ENCODE measurements at regions of chr6 and their contacts with region 1.

Region 1: GRCh38 chr6:68967549-68968300 is 332.6 kb downstream of the ADGRB3 start:
- DNase-seq: peak; percentile 72
- H3K4me3 Mint-ChIP-seq: no peak overlapping the region
- H3K27ac Mint-ChIP-seq: no peak overlapping the region
- H3K4me1 Mint-ChIP-seq: peaks cover 11% of the 10 kb centered on the region
- H3K27me3 Mint-ChIP-seq: no peaks in the 10 kb centered on the region
- CTCF ChIP-seq: peak; percentile 84

Region 2: GRCh38 chr6:68639826-68640490 is 327.8 kb before region 1 on chr6:
- CTCF ChIA-PET with region 1: no interaction called
- intact Hi-C with region 1: loop called (anchors 2 kb)
- DNase-seq: no peak
- H3K4me3 Mint-ChIP-seq: peak overlapping the region; percentile 71
- H3K27ac Mint-ChIP-seq: peak overlapping the region; percentile 40
- H3K4me1 Mint-ChIP-seq: peaks cover 27% of the 10 kb centered on the region
- H3K27me3 Mint-ChIP-seq: peaks cover 29% of the 10 kb centered on the region
- CTCF ChIP-seq: no peak

Region 3: DNA sequence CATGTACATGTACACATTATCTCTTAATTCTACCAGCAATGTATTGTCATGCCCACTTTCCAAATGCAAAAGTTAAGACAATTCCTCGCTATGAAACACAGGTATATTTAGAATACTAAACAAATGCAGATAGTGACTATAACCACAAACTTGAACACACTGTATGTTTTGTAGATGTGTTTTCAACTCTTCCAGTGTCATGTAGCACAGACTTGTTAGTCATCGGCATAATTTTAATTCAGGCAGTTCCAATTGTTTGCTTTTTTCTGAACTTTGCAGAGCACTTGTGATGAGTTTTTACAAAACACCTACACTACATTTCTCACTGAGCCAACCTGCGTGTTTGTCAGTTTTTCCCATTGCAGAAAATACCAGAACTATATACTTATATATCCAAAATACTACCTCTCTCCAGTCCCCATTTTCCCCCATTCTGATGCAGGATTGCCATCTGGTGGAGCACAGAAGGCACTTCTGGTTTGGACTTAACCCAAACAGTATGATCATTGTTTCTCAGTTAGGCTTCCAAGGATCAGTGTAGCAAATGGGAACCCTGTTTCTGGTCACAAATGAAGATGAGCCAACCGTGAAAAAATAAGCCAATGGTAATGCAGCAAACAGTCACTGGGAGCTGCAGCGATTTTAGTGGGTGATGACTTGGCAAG is 189.2 kb before region 1 on chr6:
- CTCF ChIA-PET with region 1: no interaction called
- intact Hi-C with region 1: no loop called
- DNase-seq: peak; percentile 39
- H3K4me3 Mint-ChIP-seq: no peak overlapping the region
- H3K27ac Mint-ChIP-seq: no peak overlapping the region
- H3K4me1 Mint-ChIP-seq: no peaks in the 10 kb centered on the region
- H3K27me3 Mint-ChIP-seq: no peaks in the 10 kb centered on the region
- CTCF ChIP-seq: peak; percentile 61

Region 4: DNA sequence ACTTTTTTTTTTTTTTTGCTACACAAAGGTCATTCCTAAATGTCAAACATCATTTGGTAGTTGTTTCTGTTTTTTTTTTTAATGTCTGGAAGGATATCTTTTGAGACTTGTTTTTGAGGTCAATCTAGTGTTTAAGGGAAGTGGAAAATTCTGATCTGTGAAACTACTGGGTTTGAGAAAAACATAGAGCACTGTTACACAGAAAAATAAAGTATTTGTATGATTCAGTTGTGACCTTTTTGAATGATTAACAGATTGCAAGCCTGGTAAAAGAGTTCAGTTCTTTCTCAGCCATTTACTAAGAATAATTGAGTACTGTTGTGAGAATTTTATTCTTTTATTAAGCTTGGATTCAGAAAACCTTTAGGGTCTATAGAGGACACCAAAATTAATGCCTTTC is 55.9 kb before region 1 on chr6:
- CTCF ChIA-PET with region 1: no interaction called
- intact Hi-C with region 1: no loop called
- DNase-seq: no peak
- H3K4me3 Mint-ChIP-seq: no peak overlapping the region
- H3K27ac Mint-ChIP-seq: no peak overlapping the region
- H3K4me1 Mint-ChIP-seq: no peaks in the 10 kb centered on the region
- H3K27me3 Mint-ChIP-seq: no peaks in the 10 kb centered on the region
- CTCF ChIP-seq: no peak

Region 5: GRCh38 chr6:69155467-69155866 is 187.7 kb after region 1 on chr6:
- CTCF ChIA-PET with region 1: no interaction called
- intact Hi-C with region 1: loop called (anchors 5 kb)
- DNase-seq: no peak
- H3K4me3 Mint-ChIP-seq: no peak overlapping the region
- H3K27ac Mint-ChIP-seq: no peak overlapping the region
- H3K4me1 Mint-ChIP-seq: peaks cover 9% of the 10 kb centered on the region
- H3K27me3 Mint-ChIP-seq: no peaks in the 10 kb centered on the region
- CTCF ChIP-seq: no peak

Region 6: GRCh38 chr6:69487688-69488087 is 520.0 kb after region 1 on chr6:
- CTCF ChIA-PET with region 1: no interaction called
- intact Hi-C with region 1: loop called (anchors 10 kb)
- DNase-seq: no peak
- H3K4me3 Mint-ChIP-seq: no peak overlapping the region
- H3K27ac Mint-ChIP-seq: no peak overlapping the region
- H3K4me1 Mint-ChIP-seq: no peaks in the 10 kb centered on the region
- H3K27me3 Mint-ChIP-seq: no peaks in the 10 kb centered on the region
- CTCF ChIP-seq: peak; percentile 30